CD4-positive, alpha-beta memory T cell (primary cell): ENCODE measurements at regions of chr3 and their contacts with region 1.

Region 1: DNA sequence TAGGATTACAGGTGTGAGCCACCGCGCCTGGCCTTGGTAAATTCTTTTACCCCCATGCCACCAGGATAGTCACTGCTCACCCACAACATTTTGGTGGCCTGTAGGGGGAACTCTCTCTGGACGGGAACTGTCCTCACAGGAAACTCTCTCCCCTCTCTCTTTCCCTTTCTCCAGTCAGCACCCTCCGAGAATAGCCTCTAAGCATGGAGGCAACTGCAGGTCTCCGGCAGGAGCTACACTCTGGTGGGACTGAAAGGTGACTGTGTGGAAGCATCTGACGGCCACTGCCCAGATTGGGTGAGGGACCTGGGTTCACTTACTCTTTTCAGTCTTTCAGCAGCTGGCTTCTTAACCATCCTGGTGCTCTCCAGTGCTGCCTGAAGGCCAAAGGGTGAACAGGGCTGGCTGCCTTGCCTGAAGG is 21.3 kb downstream of the TRANK1 start:
- DNase-seq: peak in 1 of 5 donors; percentile 25
- H3K4me3 ChIP-seq: no peak overlapping the region
- H3K4me3 Mint-ChIP-seq: peak overlapping the region in 2 of 8 donors; percentile 5 to 58
- H3K27ac ChIP-seq: no peak overlapping the region
- H3K27ac Mint-ChIP-seq: peak overlapping the region in 2 of 7 donors; percentile 6 to 64
- H3K4me1 ChIP-seq: peaks cover 4% of the 10 kb centered on the region
- H3K4me1 Mint-ChIP-seq: peaks cover 9 to 14% (median 11%) of the 10 kb centered on the region in 4 donors
- H3K27me3 ChIP-seq: no peaks in the 10 kb centered on the region
- H3K27me3 Mint-ChIP-seq: no peaks in the 10 kb centered on the region

Region 2: DNA sequence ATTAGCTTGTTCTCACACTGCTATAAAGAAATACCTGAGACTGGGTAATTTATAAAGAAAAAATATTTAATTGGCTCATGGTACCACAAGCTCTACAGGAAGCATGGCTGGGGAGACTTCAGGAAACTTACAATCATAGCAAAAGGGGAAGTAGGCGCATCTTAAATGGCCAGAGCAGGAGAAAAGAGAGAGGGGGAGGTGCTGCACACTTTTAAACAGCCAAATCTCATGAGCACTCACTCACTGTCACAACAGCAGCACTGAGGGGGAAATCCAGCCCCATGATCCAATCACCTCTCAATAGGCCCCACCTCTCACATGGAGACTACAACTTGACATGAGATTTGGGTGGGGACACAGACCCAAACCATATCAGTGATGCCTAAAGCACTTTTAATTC is 241.7 kb before region 1 on chr3:
- CTCF ChIA-PET with region 1: no interaction called
- POLR2A ChIA-PET with region 1: no interaction called
- intact Hi-C with region 1: no loop called
- DNase-seq: no peak
- H3K4me3 ChIP-seq: no peak overlapping the region
- H3K4me3 Mint-ChIP-seq: no peak overlapping the region
- H3K27ac ChIP-seq: no peak overlapping the region
- H3K27ac Mint-ChIP-seq: no peak overlapping the region
- H3K4me1 ChIP-seq: no peaks in the 10 kb centered on the region
- H3K4me1 Mint-ChIP-seq: no peaks in the 10 kb centered on the region
- H3K27me3 ChIP-seq: no peaks in the 10 kb centered on the region
- H3K27me3 Mint-ChIP-seq: peaks cover 0 to 8% of the 10 kb centered on the region in 2 donors

Region 3: GRCh38 chr3:36893137-36893557 is 30.4 kb before region 1 on chr3:
- CTCF ChIA-PET with region 1: interaction called, 11 read pairs
- POLR2A ChIA-PET with region 1: no interaction called
- intact Hi-C with region 1: no loop called
- DNase-seq: peak; percentile 40 to 85 (median 56)
- H3K4me3 ChIP-seq: no peak overlapping the region
- H3K4me3 Mint-ChIP-seq: peak overlapping the region in 4 of 8 donors; percentile 1 to 65 (median 56)
- H3K27ac ChIP-seq: peak overlapping the region; percentile 43
- H3K27ac Mint-ChIP-seq: peak overlapping the region; percentile 79 to 97 (median 93)
- H3K4me1 ChIP-seq: peaks cover 46% of the 10 kb centered on the region
- H3K4me1 Mint-ChIP-seq: peaks cover 40 to 74% (median 55%) of the 10 kb centered on the region in 4 donors
- H3K27me3 ChIP-seq: no peaks in the 10 kb centered on the region
- H3K27me3 Mint-ChIP-seq: no peaks in the 10 kb centered on the region

Region 4: DNA sequence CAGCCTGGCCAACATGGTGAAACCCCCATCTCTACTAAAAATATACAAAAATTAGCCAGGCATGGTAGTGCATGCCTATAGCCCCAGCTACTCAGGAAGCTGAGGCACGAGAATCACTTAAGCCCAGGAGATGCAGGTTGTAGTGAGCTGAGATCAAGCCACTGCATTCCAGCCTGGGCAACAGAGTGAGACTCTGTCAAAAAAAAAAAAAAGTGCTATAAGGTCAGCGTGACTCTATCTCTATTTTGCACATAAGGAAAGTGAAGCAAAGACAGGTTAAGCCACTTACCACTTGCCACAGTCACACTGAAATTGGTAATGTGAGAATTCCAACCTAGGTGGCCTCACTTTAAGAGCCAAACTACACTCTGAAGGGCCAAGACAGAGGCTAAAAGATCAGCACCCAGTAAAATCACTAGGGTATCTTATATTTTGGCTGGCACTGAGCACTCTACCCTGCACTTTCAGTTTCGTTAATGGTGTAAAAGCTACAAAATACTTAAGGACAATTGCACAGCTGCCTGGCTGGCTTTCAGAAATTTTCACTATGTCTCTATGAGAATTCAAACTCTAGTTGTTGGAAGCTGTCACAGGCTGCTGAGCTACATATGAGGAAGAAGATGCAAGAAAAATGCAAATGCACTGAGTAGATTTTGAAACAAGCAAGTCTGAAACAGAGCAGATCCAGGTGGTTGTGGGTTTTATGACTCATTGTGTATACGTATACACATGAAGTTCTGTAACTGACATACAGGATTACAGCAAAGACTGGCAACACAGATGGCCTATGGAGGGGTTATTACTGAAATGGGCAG is 11.3 kb before region 1 on chr3:
- CTCF ChIA-PET with region 1: interaction called, 24 read pairs
- POLR2A ChIA-PET with region 1: interaction called, 4 read pairs
- intact Hi-C with region 1: no loop called
- DNase-seq: peak; percentile 54 to 84 (median 65)
- H3K4me3 ChIP-seq: peak overlapping the region; percentile 18 to 41
- H3K4me3 Mint-ChIP-seq: peak overlapping the region; percentile 61 to 84 (median 79)
- H3K27ac ChIP-seq: peak overlapping the region; percentile 72
- H3K27ac Mint-ChIP-seq: peak overlapping the region; percentile 66 to 95 (median 84)
- H3K4me1 ChIP-seq: peaks cover 38% of the 10 kb centered on the region
- H3K4me1 Mint-ChIP-seq: peaks cover 24 to 43% (median 33%) of the 10 kb centered on the region in 4 donors
- H3K27me3 ChIP-seq: no peaks in the 10 kb centered on the region
- H3K27me3 Mint-ChIP-seq: no peaks in the 10 kb centered on the region

Region 5: GRCh38 chr3:36933540-36934296 is 10.2 kb after region 1 on chr3:
- CTCF ChIA-PET with region 1: interaction called, 10 read pairs
- POLR2A ChIA-PET with region 1: no interaction called
- intact Hi-C with region 1: no loop called
- DNase-seq: no peak
- H3K4me3 ChIP-seq: no peak overlapping the region
- H3K4me3 Mint-ChIP-seq: no peak overlapping the region
- H3K27ac ChIP-seq: no peak overlapping the region
- H3K27ac Mint-ChIP-seq: no peak overlapping the region
- H3K4me1 ChIP-seq: no peaks in the 10 kb centered on the region
- H3K4me1 Mint-ChIP-seq: peaks cover 0 to 10% (median 1%) of the 10 kb centered on the region in 4 donors
- H3K27me3 ChIP-seq: no peaks in the 10 kb centered on the region
- H3K27me3 Mint-ChIP-seq: no peaks in the 10 kb centered on the region